ENCODE measurements at regions of chr10 and their contacts with region 1.

Region 1: DNA sequence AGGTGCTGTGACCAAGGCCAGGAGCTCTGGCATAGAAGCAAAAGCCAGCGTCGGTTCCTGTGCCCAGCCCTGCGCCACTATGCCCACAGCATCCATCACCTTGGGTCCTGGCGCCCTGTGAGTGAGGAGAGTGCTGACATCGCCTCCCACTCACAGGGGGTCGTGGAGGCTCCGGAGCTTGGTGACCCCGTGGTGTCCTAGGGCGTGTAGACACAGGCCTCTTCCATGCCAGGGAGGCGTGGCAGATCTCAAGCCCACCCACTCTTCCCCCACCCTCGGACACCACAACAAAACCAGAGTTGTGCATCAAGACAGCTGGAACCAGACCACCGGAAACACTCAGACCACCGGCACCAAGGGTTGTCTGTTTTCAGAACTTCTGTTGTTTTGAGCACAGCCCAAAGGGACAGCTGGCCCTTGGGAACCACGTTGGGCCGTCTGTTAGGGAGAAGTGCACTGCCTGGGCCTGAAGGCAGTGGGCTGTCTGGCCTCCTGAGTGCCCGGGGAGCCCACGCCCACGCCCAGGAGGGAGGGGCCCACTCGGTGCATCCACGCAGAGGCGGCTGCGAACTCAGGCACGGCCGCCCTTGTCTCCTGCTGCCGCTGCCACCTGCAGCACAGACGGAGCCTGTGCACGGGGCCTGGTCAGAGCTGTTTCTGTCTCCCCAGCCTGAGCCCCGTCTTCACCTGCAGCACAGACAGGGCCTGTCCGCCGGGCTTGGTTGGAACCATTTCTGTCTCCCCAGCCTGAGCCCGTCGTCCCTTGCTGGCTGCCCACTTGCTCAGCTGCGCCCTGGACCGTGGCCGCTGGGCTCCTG is 106.3 kb downstream of the INPP5A start:
- DNase-seq: no peak
- CTCF ChIP-seq: no peak

Region 2: GRCh38 chr10:132452631-132453469 is 191.1 kb before region 1 on chr10:
- in situ Hi-C with region 1: loop called (anchors 10 kb)
- DNase-seq: peak; percentile 99
- CTCF ChIP-seq: peak; percentile 96

Region 3: DNA sequence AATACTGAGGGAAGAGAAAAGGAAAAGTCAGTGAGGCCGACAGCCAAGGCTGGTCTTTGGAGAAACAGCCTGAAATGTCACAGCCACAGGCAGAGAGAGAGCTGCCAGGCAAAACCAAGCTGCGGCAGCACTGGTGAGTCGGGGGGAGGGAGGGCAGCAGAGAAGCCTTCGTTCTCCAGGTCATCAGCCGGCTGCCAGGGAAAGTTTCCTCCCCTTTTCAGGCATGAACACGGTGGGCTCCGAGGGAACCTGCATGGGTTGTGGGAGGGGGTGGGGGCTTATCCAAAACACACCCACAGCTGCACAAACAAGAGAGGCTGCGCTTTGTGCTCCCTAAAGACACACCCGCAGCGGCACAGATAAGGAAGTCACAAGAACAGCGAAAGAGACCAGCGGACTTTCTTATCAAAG is 204.4 kb after region 1 on chr10:
- in situ Hi-C with region 1: no loop called
- DNase-seq: no peak
- CTCF ChIP-seq: no peak

Measured in GM13977 (cell line).